SK-N-SH (cell line): ENCODE measurements at regions of chr3 and their contacts with region 1.

Region 1: DNA sequence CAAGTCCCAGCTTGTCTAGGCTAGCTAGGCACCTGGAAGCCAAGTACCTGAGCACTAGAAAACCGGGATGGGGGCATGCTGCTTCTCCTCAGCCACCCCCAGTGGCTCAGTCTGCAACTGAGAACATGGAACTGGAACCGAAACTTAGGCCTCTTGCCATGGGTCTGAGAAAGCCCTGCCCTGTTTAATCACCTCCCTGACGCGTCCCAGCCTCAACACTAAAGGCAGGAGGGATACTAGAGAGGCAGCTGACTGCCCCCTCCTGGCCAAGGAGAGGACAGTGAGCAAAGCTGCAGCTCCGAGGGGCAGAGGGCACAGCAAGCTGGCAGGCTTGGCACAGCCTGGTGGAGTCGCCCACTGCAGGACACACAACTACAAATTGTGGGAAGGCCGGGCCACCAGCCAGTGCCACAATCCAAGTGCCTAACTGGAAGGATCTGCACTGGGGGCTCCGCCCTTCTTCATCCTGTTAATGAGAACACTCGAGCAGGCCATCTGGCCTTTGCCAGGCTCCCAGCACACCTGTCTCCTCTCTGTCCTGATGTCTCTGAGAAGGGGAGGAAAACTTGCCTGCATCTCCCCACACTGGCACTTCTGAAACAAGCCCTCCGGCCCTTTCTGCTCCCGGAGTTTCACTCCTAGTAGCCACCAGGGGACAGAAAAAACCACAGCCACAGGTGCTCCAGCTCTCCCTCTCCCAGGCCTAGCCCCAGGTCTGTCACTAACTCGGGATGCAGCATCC is 53.7 kb downstream of the BDH1 start:
- DNase-seq: peak; percentile 68
- H3K4me3 ChIP-seq: no peak overlapping the region; a peak in 1 of 4 replicates
- H3K27ac ChIP-seq: peak overlapping the region in 1 of 2 experiments; percentile 29; a peak in 1 of 4 replicates
- H3K4me1 ChIP-seq: peaks cover 0 to 45% of the 10 kb centered on the region in 2 experiments; a peak in 2 of 4 replicates
- H3K27me3 ChIP-seq: no peaks in the 10 kb centered on the region
- CTCF ChIP-seq: peak; percentile 61
- EP300 ChIP-seq: no peak
- RAD21 ChIP-seq: peak; percentile 73

Region 2: GRCh38 chr3:197456261-197457091 is 45.6 kb before region 1 on chr3:
- CTCF ChIA-PET with region 1: interaction called, 16 read pairs
- POLR2A ChIA-PET with region 1: no interaction called
- DNase-seq: no peak
- H3K4me3 ChIP-seq: no peak overlapping the region
- H3K27ac ChIP-seq: no peak overlapping the region
- H3K4me1 ChIP-seq: peaks cover 0 to 8% of the 10 kb centered on the region in 2 experiments; a peak in 1 of 4 replicates
- H3K27me3 ChIP-seq: no peaks in the 10 kb centered on the region
- CTCF ChIP-seq: no peak
- EP300 ChIP-seq: no peak
- RAD21 ChIP-seq: no peak

Region 3: DNA sequence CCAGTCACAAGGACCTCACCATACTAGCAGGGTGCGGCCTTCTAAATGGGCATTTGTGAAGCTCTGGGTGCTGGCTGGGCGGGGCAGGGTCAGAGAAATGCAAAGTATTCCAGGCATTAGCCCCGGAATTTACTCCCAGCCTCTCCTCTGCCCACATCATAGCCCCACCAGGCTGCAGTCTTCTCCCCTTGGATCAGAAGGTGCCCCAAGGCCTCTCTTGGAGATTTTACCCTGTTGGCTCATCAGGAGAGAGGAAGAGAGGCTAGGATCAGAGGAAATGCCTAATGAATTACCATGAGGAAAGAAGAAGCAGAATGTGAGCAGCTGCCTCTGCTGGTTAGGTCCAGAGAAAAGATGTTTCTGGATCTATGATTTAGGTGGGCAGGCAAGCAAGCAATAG is 12.0 kb before region 1 on chr3:
- CTCF ChIA-PET with region 1: interaction called, 26 read pairs
- POLR2A ChIA-PET with region 1: interaction called, 3 read pairs
- DNase-seq: no peak
- H3K4me3 ChIP-seq: no peak overlapping the region
- H3K27ac ChIP-seq: peak overlapping the region; percentile 44 to 92
- H3K4me1 ChIP-seq: peaks cover 40 to 69% of the 10 kb centered on the region in 2 experiments
- H3K27me3 ChIP-seq: no peaks in the 10 kb centered on the region
- CTCF ChIP-seq: no peak
- EP300 ChIP-seq: peak in 1 of 2 experiments; percentile 57; a peak in 2 of 4 replicates
- RAD21 ChIP-seq: no peak

Region 4: GRCh38 chr3:197520311-197521276 is 18.5 kb after region 1 on chr3:
- CTCF ChIA-PET with region 1: interaction called, 5 read pairs
- POLR2A ChIA-PET with region 1: interaction called, 15 read pairs
- DNase-seq: peak; percentile 88
- H3K4me3 ChIP-seq: no peak overlapping the region
- H3K27ac ChIP-seq: peak overlapping the region in 1 of 2 experiments; percentile 94; a peak in 2 of 4 replicates
- H3K4me1 ChIP-seq: peaks cover 13 to 42% of the 10 kb centered on the region in 2 experiments; a peak in 3 of 4 replicates
- H3K27me3 ChIP-seq: no peaks in the 10 kb centered on the region
- CTCF ChIP-seq: no peak
- EP300 ChIP-seq: peak in 1 of 2 experiments; percentile 66; a peak in 2 of 4 replicates
- RAD21 ChIP-seq: no peak; the same call in 1 of the 2 replicates

Region 5: GRCh38 chr3:197541756-197542539 is 39.9 kb after region 1 on chr3:
- CTCF ChIA-PET with region 1: no interaction called
- POLR2A ChIA-PET with region 1: no interaction called
- DNase-seq: peak; percentile 92
- H3K4me3 ChIP-seq: peak overlapping the region in 1 of 2 experiments; percentile 10; a peak in 1 of 4 replicates
- H3K27ac ChIP-seq: peak overlapping the region in 1 of 2 experiments; percentile 77; a peak in 2 of 4 replicates
- H3K4me1 ChIP-seq: peaks cover 0 to 8% of the 10 kb centered on the region in 2 experiments; a peak in 1 of 4 replicates
- H3K27me3 ChIP-seq: no peaks in the 10 kb centered on the region
- CTCF ChIP-seq: no peak
- EP300 ChIP-seq: 0 out of 4 replicates have a peak, but pooled peaks of 1 of the 2 experiments have one; percentile 34
- RAD21 ChIP-seq: no peak

Region 6: DNA sequence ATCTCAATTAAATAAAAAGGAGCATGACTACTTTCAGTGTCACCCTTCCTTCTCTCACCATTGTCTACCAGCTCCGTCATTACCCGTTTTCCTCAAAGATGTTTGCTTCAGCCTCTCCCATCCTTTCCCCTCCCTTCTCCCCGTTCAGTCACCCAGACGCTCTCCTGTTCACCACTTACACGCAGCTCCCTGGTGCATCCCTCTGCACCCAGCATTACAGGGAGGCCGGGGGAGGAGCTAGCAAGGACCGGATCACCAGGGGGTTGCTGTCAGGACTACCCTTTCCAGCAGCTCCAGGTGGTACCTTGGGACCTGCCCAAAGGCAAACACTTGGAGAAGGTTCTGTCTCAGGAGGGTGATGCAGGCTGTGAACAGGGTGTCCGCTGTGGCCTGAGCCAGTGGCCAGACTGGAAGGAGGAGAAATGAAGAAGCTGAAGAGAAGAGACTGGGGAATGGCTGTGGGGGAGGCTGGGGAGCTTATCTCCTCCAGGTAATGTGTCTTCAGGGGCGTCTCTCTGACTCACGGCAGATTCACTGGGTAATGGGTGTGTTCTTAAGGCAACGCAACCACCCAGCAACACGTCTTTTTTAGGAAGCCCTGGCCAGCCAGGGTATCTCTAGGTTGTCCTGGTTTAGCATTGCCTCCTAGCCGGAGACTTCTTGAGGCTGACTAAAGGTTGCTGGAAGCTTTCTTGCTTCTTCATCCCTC is 75.5 kb after region 1 on chr3:
- CTCF ChIA-PET with region 1: no interaction called
- POLR2A ChIA-PET with region 1: no interaction called
- DNase-seq: no peak
- H3K4me3 ChIP-seq: no peak overlapping the region
- H3K27ac ChIP-seq: no peak overlapping the region
- H3K4me1 ChIP-seq: no peaks in the 10 kb centered on the region; a peak in 1 of 4 replicates
- H3K27me3 ChIP-seq: no peaks in the 10 kb centered on the region; the same call in 1 of the 2 replicates
- CTCF ChIP-seq: no peak
- EP300 ChIP-seq: no peak
- RAD21 ChIP-seq: no peak

Region 7: GRCh38 chr3:197782230-197782629 is 280.2 kb after region 1 on chr3:
- CTCF ChIA-PET with region 1: no interaction called
- POLR2A ChIA-PET with region 1: no interaction called
- DNase-seq: no peak
- H3K4me3 ChIP-seq: no peak overlapping the region
- H3K27ac ChIP-seq: no peak overlapping the region
- H3K4me1 ChIP-seq: no peaks in the 10 kb centered on the region
- H3K27me3 ChIP-seq: no peaks in the 10 kb centered on the region
- CTCF ChIP-seq: no peak
- EP300 ChIP-seq: no peak
- RAD21 ChIP-seq: no peak